ENCODE measurements at regions of chrX and their contacts with region 1.

Region 1: GRCh38 chrX:129982274-129983251 is at the start of gene BCORL1:
- DNase-seq: peak; percentile 83 to 93 (median 88)
- H3K4me3 ChIP-seq: peak within 1 kb of the TSS; percentile 29 to 43
- H3K4me3 Mint-ChIP-seq: peak within 1 kb of the TSS in 2 of 8 donors; percentile 86 to 91
- H3K27ac ChIP-seq: no peak within 1 kb of the TSS
- H3K27ac Mint-ChIP-seq: peak within 1 kb of the TSS in 6 of 7 donors; percentile 74 to 90 (median 86)
- H3K4me1 ChIP-seq: peaks cover 7% of the 10 kb centered on the region
- H3K4me1 Mint-ChIP-seq: peaks cover 11 to 37% (median 22%) of the 10 kb centered on the region in 4 donors
- H3K27me3 ChIP-seq: no peaks in the 10 kb centered on the region
- H3K27me3 Mint-ChIP-seq: no peaks in the 10 kb centered on the region
- total RNA-seq, gene BCORL1: 14.0 to 14.2 TPM

Region 2: GRCh38 chrX:129931411-129932015 is 51.0 kb before region 1 on chrX:
- CTCF ChIA-PET with region 1: no interaction called
- POLR2A ChIA-PET with region 1: interaction called, 5 read pairs
- intact Hi-C with region 1: loop called (anchors 1 kb)
- DNase-seq: peak; percentile 39 to 71 (median 50)
- H3K4me3 ChIP-seq: peak overlapping the region in 1 of 2 donors; percentile 65
- H3K4me3 Mint-ChIP-seq: peak overlapping the region; percentile 72 to 85 (median 82)
- H3K27ac ChIP-seq: peak overlapping the region; percentile 40
- H3K27ac Mint-ChIP-seq: peak overlapping the region; percentile 80 to 93 (median 90)
- H3K4me1 ChIP-seq: no peaks in the 10 kb centered on the region
- H3K4me1 Mint-ChIP-seq: peaks cover 0 to 5% (median 4%) of the 10 kb centered on the region in 4 donors
- H3K27me3 ChIP-seq: no peaks in the 10 kb centered on the region
- H3K27me3 Mint-ChIP-seq: no peaks in the 10 kb centered on the region